GM12878 (cell line): ENCODE measurements at regions of chr11 and their contacts with region 1.

Region 1: DNA sequence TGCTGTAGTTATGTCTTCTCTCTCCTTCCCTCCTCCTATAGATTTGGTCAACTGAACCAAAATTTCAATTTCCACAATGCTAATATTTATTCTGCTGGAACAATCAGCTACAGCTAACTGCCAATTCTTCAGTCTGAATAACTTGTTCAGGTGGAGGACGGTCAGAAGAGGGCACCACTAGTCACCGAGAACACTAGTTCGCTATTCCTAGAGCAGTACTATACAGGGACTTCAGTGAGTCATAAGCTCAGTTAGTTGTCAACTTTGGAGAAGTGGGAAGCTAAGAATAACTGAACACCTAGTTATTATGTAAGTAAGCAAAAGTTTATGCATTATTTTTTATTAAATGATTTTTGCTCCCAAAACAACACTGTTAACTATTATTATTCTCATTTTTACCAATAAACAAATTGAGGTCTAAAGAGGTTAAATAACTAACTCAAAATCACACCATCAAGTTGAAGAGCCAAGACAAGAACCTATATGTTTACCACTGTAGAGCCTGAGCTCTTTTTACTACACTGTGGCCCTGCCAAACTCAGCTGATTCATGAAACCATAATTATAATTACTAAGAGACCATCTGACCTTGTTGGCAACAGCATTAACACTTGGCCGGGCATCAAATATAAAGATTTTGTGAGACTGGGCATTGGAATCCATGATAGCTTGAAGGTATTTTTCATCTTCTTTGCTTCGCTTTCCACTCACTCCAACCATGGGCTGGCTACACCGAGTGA is 59.0 kb downstream of the CEP57 start:
- DNase-seq: no peak
- ATAC-seq: peak; percentile 80
- H3K4me3 ChIP-seq: no peak overlapping the region
- H3K27ac ChIP-seq: no peak overlapping the region
- H3K4me1 ChIP-seq: no peaks in the 10 kb centered on the region
- H3K27me3 ChIP-seq: no peaks in the 10 kb centered on the region
- CTCF ChIP-seq: peak; percentile 24 to 51 (median 44); a peak in 4 of 6 replicates
- EP300 ChIP-seq: no peak
- POLR2A ChIP-seq: no peak
- RAD21 ChIP-seq: peak; percentile 60

Region 2: DNA sequence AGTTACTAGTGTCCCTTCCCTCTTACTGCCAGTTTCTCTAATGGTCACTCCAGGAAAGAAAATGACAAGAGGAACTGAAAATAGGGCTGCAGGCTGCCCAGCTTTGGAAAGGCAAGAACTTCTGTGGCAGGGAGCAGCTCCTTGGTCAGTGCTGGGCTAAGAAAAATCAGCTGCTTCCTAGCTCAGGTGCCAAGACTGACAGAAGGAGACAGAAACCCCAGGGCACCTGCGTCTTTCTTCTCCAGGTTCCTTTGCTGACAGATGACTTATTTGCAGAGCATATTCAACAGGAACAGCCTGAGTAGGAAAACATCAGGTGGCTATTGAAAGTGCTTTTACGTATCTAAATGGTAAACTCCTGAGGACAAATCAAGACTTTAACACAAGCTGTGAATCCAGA is 468.3 kb after region 1 on chr11:
- CTCF ChIA-PET with region 1: no interaction called
- POLR2A ChIA-PET with region 1: no interaction called
- RAD21 ChIA-PET with region 1: no interaction called
- SMC1A ChIA-PET with region 1: no interaction called
- in situ Hi-C with region 1: no loop called
- intact Hi-C with region 1: no loop called
- DNase-seq: no peak
- ATAC-seq: no peak
- H3K4me3 ChIP-seq: no peak overlapping the region
- H3K27ac ChIP-seq: no peak overlapping the region
- H3K4me1 ChIP-seq: peaks cover 20% of the 10 kb centered on the region
- H3K27me3 ChIP-seq: no peaks in the 10 kb centered on the region
- CTCF ChIP-seq: no peak
- EP300 ChIP-seq: no peak
- POLR2A ChIP-seq: no peak
- RAD21 ChIP-seq: no peak

Region 3: DNA sequence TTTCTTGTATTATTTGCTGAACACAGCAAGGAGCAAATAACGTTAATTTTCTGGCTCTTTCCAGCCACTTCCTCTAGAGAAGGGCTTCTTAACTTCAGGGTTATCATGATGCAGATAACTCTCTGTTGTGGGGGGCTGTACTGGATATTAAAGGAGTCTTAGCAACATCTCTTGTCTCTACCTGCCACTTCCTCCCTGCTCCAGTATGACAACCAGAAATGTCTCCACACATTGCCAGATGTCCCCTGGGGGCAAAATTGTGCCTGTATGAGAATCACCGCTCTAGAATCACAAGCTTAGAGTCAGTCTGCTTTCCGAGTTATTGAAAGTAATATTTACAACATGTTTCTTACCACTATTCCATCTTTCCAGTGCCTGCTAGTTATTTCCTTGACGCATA is 547.4 kb after region 1 on chr11:
- CTCF ChIA-PET with region 1: interaction called, 46 read pairs
- POLR2A ChIA-PET with region 1: no interaction called
- RAD21 ChIA-PET with region 1: interaction called, 24 read pairs
- SMC1A ChIA-PET with region 1: interaction called, 41 read pairs
- in situ Hi-C with region 1: no loop called
- intact Hi-C with region 1: loop called (anchors 1 kb)
- DNase-seq: no peak
- ATAC-seq: no peak
- H3K4me3 ChIP-seq: no peak overlapping the region
- H3K27ac ChIP-seq: no peak overlapping the region
- H3K4me1 ChIP-seq: no peaks in the 10 kb centered on the region
- H3K27me3 ChIP-seq: no peaks in the 10 kb centered on the region
- CTCF ChIP-seq: no peak
- EP300 ChIP-seq: no peak
- POLR2A ChIP-seq: no peak
- RAD21 ChIP-seq: no peak

Region 4: DNA sequence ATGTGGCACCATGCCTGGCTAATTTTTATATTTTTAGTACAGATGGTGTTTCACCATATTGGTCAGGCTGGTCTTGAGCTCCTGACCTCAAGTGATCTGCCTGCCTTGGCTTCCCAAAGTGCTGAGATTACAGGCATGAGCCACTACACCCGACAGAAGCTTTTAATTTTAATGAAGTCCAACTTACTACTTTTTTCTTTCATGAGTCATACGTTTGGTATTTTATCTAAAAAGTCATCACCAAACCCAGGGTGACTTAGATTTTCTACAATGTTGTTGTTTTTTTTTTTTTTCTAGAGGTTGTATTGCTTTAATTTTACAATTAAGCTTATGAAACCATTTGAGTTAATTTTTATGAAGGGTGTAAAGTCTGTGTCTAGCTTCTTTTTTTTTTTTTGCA is 575.4 kb after region 1 on chr11:
- CTCF ChIA-PET with region 1: interaction called, 25 read pairs
- POLR2A ChIA-PET with region 1: no interaction called
- RAD21 ChIA-PET with region 1: interaction called, 6 read pairs
- SMC1A ChIA-PET with region 1: interaction called, 17 read pairs
- in situ Hi-C with region 1: no loop called
- intact Hi-C with region 1: loop called (anchors 1 kb)
- DNase-seq: no peak
- ATAC-seq: no peak
- H3K4me3 ChIP-seq: no peak overlapping the region
- H3K27ac ChIP-seq: no peak overlapping the region
- H3K4me1 ChIP-seq: no peaks in the 10 kb centered on the region
- H3K27me3 ChIP-seq: no peaks in the 10 kb centered on the region
- CTCF ChIP-seq: no peak
- EP300 ChIP-seq: no peak
- POLR2A ChIP-seq: no peak
- RAD21 ChIP-seq: no peak